Cardiac septum (tissue), 1 donor: ENCODE measurements at regions of chr6 and their contacts with region 1.

Region 1: DNA sequence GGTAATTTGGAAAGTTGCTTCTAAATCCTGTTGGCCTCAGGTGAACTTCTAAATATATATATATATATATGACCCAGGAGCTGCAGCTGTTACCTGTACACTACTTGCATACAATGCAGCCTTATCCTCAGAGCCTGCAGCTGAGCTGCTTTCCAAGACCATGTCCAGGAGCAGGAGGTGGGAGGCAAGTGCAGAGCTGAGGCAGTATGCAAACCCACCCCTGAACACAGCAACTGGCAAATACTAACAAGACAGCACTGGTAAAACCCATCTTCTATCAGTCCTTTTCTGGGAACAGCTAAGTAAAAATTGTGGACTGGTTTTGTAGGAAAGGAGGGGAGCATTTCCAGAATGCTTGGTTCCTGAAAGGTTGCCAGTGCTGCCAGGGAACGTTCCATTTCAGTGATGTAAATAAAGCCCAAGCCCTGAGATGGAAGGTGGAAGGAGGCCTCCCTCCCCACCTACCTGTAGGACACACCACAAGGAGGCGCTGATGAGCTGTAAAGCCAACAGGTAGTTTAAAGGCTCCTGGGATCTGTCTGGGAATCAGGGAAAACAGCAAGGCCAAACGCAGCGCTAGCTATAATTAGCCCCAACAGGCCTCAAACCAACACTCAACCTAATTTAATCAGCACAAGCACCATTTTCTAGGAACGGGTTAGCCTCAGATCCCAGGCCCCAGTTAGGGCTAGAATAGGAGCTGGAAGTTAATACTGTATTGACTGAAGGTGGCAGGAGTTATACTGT is 93.8 kb upstream of the MAP7 start:
- DNase-seq: peak; percentile 90

Region 2: DNA sequence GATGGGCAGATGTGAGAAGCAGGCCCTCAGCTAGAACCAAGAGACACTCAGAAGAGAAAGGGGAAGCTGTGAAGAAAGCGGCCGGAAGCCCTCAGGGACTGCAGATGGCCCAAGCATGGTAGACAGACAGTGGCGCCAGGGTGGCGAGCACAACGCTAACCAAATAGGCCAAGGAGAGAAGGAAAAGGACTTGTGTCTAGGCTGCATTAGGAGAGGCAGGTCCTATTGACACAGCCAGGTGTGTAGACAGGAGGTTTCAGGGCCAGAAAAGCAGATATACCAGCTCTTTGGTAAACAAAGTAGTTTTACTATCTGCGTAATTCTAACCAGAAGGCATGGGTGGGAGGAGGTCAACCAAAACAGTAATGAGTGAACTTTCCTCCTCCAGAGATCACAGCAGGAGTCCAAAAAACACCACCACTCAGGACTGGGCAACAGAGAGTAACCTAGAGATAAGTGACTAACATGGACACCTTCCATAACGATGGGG is 78.0 kb before region 1 on chr6:
- intact Hi-C with region 1: no loop called
- DNase-seq: peak; percentile 83

Region 3: GRCh38 chr6:136719280-136720044 is 75.4 kb after region 1 on chr6:
- intact Hi-C with region 1: loop called (anchors 5 kb)
- DNase-seq: no peak